Breast epithelium (tissue), 4 donors: ENCODE measurements at regions of chr4 and their contacts with region 1.

Region 1: DNA sequence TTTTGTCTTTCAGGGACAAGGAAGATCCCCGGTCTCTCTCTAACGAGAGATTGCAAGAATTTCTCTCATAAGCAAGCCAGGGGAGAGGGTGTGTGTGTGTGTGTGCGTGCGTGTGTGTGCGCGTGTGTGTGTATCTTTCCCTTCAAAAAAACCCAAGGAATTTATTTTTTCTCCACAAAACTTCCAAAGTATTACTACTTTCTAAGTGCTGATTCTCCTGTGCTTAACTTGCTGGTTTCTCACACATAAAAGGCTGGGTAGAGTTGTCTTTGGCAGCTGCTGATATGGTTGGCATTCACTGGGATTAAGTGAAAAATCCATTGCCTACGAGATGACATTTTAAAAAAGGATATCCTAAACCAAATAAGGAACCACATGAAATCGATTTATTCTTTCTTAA is 435.7 kb downstream of the RAPGEF2 start:
- DNase-seq: no peak
- H3K4me3 ChIP-seq: no peak overlapping the region
- H3K27ac ChIP-seq: no peak overlapping the region
- H3K4me1 ChIP-seq: no peaks in the 10 kb centered on the region
- H3K27me3 ChIP-seq: no peaks in the 10 kb centered on the region
- CTCF ChIP-seq: no peak
- POLR2A ChIP-seq: no peak

Region 2: GRCh38 chr4:159191989-159192388 is 346.6 kb before region 1 on chr4:
- intact Hi-C with region 1: no loop called
- DNase-seq: no peak
- H3K4me3 ChIP-seq: no peak overlapping the region
- H3K27ac ChIP-seq: no peak overlapping the region
- H3K4me1 ChIP-seq: no peaks in the 10 kb centered on the region
- H3K27me3 ChIP-seq: no peaks in the 10 kb centered on the region
- CTCF ChIP-seq: no peak
- POLR2A ChIP-seq: no peak

Region 3: DNA sequence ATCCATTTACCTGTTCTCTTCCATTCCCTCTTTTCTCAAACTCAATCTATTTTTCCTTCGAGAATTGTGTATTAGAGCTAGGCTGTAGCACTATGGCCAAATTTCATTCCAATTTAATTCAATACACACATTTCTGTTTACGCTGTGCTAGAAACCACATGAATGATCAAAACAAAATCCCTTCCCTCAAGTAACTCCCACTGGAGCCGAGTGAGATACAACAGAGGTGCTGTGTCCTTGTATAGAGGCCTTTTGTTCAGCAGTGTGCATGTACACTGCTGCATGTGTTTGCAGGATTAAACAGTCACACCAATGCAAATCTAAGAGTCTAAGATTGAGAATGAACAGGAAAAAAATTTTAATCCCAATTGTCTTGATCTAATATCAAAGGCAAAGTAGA is 298.5 kb after region 1 on chr4:
- intact Hi-C with region 1: loop called (anchors 5 kb)
- DNase-seq: no peak
- H3K4me3 ChIP-seq: no peak overlapping the region
- H3K27ac ChIP-seq: no peak overlapping the region
- H3K4me1 ChIP-seq: no peaks in the 10 kb centered on the region
- H3K27me3 ChIP-seq: no peaks in the 10 kb centered on the region
- CTCF ChIP-seq: no peak
- POLR2A ChIP-seq: no peak